Uterus (tissue), 4 donors: ENCODE measurements at regions of chr5 and their contacts with region 1.

Region 1: DNA sequence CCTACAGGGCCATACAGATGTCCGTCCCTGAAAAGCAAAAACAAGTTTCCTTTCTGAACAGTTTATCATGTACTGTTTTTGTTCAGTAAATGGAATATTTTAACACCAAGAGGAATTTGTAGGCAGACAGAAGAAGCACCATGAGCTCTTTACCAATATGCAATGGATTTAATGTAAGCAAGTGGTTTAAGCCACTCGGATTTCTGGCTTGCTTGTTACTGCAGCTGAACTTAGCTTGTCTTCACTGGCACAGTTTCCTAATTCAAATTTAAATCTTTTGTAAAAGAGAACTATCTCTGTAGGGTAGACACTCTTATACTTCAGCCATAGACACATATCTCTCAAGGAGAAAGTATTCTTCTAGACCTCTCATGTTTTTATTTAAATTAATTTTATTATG is 12.7 kb upstream of the EBF1 start:
- DNase-seq: no peak
- H3K4me3 ChIP-seq: no peak overlapping the region
- H3K27ac ChIP-seq: no peak overlapping the region
- H3K4me1 ChIP-seq: no peaks in the 10 kb centered on the region
- H3K27me3 ChIP-seq: no peaks in the 10 kb centered on the region
- CTCF ChIP-seq: no peak
- POLR2A ChIP-seq: no peak

Region 2: GRCh38 chr5:158074992-158075769 is 1037.3 kb before region 1 on chr5:
- intact Hi-C with region 1: loop called (anchors 10 kb)
- DNase-seq: peak; percentile 63 to 79
- H3K4me3 ChIP-seq: peak overlapping the region in 1 of 2 donors; percentile 28
- H3K27ac ChIP-seq: peak overlapping the region; percentile 67 to 84
- H3K4me1 ChIP-seq: no peaks in the 10 kb centered on the region
- H3K27me3 ChIP-seq: no peaks in the 10 kb centered on the region
- CTCF ChIP-seq: peak; percentile 58 to 85 (median 72)
- POLR2A ChIP-seq: no peak

Region 3: GRCh38 chr5:158943057-158943456 is 169.4 kb before region 1 on chr5:
- intact Hi-C with region 1: no loop called
- DNase-seq: peak in 1 of 2 donors; percentile 34
- H3K4me3 ChIP-seq: no peak overlapping the region
- H3K27ac ChIP-seq: no peak overlapping the region
- H3K4me1 ChIP-seq: no peaks in the 10 kb centered on the region
- H3K27me3 ChIP-seq: no peaks in the 10 kb centered on the region
- CTCF ChIP-seq: no peak
- POLR2A ChIP-seq: no peak

Region 4: DNA sequence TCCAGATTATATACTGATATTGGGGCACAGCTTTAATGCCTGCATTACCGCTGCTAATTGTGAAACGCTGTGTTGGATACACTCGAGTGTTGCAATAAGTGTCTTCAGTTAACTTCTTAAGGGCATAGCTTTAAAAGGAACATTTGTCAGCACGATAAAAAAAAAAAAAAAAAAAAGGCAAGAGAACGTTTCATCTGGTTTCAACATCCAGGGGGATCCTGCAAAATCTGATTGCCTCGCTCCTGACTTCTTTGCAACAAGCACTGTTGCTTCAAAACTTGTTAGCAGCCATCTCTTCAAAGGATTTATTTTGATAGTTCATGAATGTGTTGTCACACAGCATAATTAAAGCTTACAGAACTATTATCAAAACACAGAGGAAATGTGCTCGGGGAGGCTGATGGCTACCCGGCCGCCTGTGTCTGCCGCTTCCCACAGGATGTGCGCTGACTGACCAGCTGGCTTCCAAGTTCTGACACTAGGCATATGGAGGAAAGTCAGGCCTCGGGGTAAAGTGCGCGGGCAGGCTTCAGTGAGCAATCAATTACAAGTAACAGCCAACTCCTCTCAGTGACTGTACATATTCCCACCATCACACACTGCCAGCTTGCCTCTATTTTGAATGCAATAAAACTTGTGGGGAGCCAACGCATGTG is 90.4 kb before region 1 on chr5:
- intact Hi-C with region 1: no loop called
- DNase-seq: peak; percentile 61 to 68
- H3K4me3 ChIP-seq: peak overlapping the region in 1 of 2 donors; percentile 3
- H3K27ac ChIP-seq: peak overlapping the region; percentile 64 to 66
- H3K4me1 ChIP-seq: no peaks in the 10 kb centered on the region
- H3K27me3 ChIP-seq: no peaks in the 10 kb centered on the region
- CTCF ChIP-seq: no peak
- POLR2A ChIP-seq: no peak

Region 5: GRCh38 chr5:159262859-159263567 is 150.6 kb after region 1 on chr5 and contains the start of gene UBLCP1:
- intact Hi-C with region 1: no loop called
- DNase-seq: peak; percentile 76 to 78
- H3K4me3 ChIP-seq: peak within 1 kb of the TSS; percentile 68 to 93
- H3K27ac ChIP-seq: peak within 1 kb of the TSS; percentile 86 to 87
- H3K4me1 ChIP-seq: no peaks in the 10 kb centered on the region
- H3K27me3 ChIP-seq: no peaks in the 10 kb centered on the region
- CTCF ChIP-seq: no peak
- POLR2A ChIP-seq: peak in 1 of 2 donors; percentile 50
- total RNA-seq, gene UBLCP1: 7.4 to 39.0 (median 21.6) TPM